ENCODE measurements at regions of chr22 and their contacts with region 1.

Region 1: GRCh38 chr22:28674121-28674563 is 5.5 kb downstream of the TTC28 start:
- DNase-seq: peak; percentile 14
- H3K4me3 ChIP-seq: no peak overlapping the region
- CTCF ChIP-seq: no peak

Region 2: GRCh38 chr22:28594797-28595462 is 79.2 kb before region 1 on chr22:
- CTCF ChIA-PET with region 1: no interaction called
- POLR2A ChIA-PET with region 1: no interaction called
- DNase-seq: peak; percentile 31
- H3K4me3 ChIP-seq: no peak overlapping the region
- CTCF ChIP-seq: peak; percentile 44

Region 3: DNA sequence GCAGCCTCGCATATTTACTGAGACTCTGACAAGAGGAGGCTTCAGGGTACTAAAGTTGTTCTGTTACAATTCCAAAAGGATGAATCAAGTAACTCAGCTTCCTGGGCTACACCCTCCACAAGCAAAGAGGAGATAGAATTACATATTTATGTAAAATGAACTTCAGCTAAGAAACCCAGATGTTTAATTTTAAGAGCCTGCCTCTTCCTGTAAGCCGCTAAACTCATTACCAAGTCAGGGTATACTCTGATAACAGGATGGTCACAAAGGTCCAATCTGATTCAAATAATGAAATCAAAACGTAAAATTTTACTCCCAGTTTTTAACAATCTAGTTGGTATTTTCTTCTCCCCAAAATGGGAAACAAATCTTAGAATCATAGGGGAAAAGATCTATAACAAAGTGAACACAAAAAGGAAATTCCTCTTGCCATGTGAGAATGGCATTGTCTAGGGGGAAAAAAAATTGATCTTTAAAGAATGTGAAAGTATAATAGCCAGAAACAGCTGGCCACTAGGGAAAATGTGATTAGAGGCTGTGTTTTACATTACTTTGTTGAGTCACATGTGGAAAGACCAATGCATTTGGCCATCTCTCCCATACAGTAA is 36.5 kb after region 1 on chr22:
- CTCF ChIA-PET with region 1: no interaction called
- POLR2A ChIA-PET with region 1: interaction called, 11 read pairs
- DNase-seq: peak; percentile 69
- H3K4me3 ChIP-seq: no peak overlapping the region
- CTCF ChIP-seq: no peak